Cardiac septum (tissue), 1 donor: ENCODE measurements at regions of chr2 and their contacts with region 1.

Region 1: DNA sequence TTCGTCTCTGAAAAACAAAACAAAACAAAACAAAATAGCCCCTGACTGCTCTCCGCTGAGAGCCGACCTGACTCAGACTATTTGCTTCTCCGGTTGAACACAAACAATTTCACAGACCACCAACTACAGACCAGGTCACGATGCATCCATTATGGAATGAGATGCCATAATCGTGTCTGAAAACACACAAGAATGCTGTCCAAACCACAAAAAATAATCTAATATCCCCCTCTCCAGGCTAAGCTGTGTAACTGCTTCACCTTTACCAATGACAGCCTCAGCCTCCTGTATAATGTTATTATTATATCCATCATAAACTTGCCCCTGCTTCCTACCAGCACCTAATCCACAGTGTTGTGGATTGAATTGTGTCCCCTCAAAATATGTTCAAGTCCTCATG is 114.7 kb downstream of the DNAH6 start:
- DNase-seq: no peak

Region 2: DNA sequence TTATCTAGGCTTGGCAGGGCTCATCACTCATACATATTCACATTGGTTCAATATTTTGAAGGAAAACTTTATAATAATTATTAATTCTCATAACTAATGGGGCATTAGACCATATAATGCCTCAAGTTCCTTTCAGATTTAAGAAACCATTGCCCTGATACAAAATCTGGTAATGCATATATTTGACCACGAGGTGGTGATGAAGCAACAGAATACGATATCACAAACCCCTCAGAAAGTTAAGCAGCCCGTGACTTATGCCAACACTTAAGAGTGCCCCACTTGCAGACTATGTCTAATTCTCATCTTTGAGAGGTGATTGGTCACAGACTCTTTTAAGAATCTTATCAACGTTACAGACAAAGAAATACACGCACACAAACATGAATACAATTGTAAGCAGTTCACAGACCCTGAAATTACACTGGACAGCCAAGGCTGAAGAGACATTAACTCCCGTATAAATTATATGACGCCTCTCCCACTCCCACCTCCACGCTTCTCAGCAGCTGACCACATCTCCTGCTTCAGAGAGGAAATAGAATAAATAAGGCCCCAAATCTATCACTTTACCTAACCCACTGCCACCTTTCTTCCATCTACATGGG is 135.4 kb before region 1 on chr2:
- intact Hi-C with region 1: loop called (anchors 2 kb)
- DNase-seq: no peak